Ovary (tissue), 10 donors: ENCODE measurements at regions of chr3 and their contacts with region 1.

Region 1: DNA sequence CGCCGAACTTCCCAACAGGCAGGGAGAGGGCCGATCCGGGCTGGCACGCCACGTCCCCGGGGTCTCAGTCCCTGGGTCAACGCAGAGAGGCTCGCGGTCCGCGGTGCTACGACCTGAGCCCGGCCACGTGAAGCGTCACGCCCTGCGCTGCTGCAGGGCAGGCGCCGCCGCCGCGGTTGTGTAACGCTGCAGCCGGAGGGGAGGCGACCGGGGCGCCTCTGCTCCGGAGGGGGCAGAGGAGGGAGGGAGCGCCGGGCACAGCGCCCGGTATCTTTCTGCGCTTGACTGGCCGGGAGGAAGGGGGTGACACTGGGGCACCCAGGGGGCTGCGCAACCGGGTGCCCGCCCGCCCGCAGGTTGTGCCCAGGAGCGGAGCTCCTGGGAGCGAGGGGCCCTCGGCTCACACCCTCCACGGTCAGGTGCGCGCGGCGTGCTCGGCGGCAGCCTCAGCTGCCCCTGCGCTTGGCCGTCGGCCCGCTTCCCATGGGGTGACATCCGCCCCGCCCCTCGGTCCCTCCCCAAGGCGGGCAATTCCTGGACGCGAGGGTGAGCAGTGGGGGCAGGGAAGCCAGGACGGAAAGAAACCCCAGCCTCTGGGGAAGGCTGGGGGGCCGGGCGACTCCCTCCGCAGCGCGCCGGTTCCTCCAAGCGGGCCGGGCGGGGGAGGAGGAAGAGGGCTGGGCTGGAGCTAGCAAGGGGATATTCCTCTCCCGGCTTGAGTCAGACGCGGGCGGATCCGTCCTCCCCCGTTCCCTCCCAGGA is 852 bp upstream of the BHLHE40 start:
- DNase-seq: peak; percentile 95 to 97 (median 97)
- H3K4me3 ChIP-seq: peak overlapping the region; percentile 87
- H3K27ac ChIP-seq: peak overlapping the region; percentile 97 to 98
- H3K4me1 ChIP-seq: peaks cover 5% of the 10 kb centered on the region
- H3K27me3 ChIP-seq: no peaks in the 10 kb centered on the region
- CTCF ChIP-seq: no peak
- EP300 ChIP-seq: peak; percentile 85
- POLR2A ChIP-seq: peak; percentile 55

Region 2: DNA sequence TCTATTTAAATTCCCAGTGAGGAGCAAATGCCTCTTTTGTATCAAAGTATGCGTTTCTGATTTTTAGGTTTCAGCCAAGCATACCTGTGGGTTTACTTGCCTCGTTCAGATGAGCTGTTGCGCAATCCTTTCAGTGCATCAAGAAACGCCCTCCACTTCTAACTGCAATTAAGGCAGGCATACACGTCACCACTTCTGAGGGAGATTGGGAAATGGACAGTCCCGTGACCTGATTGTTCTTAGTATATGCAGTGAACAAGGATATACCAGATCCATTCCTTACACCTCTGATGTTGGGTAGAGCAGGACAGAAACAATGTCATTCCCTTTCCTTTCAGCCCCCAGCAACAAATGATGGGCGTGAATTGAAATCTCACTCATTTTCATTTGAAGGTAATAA is 266.2 kb before region 1 on chr3:
- intact Hi-C with region 1: loop called in 1 of 4 experiments (anchors 5 kb)
- DNase-seq: peak in 1 of 5 donors; percentile 57
- H3K4me3 ChIP-seq: no peak overlapping the region
- H3K27ac ChIP-seq: no peak overlapping the region
- H3K4me1 ChIP-seq: no peaks in the 10 kb centered on the region
- H3K27me3 ChIP-seq: no peaks in the 10 kb centered on the region
- CTCF ChIP-seq: no peak
- EP300 ChIP-seq: no peak
- POLR2A ChIP-seq: no peak

Region 3: DNA sequence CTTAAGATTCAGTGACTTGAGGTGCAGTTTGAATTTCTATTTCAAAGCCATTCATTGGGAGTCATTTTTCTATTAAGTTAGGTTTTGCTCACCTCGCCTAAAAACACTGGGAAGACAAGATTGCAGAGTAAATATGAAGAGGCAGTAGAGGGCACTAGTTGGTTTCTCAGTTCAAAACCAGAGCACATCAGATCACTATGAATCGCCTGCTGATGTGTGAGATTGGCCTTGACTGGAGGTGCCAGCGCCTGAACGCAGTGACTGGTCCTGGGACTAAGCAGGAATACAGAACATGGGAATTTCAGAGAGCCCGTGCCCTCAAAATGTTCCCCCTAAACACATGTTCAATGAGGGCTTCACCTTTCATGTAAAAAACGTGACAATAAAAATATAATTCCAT is 256.3 kb before region 1 on chr3:
- intact Hi-C with region 1: loop called (anchors 2 to 10 kb)
- DNase-seq: peak in 2 of 5 donors; percentile 53 to 66
- H3K4me3 ChIP-seq: no peak overlapping the region
- H3K27ac ChIP-seq: peak overlapping the region; percentile 46 to 73
- H3K4me1 ChIP-seq: peaks cover 11% of the 10 kb centered on the region
- H3K27me3 ChIP-seq: no peaks in the 10 kb centered on the region
- CTCF ChIP-seq: peak in 2 of 3 donors; percentile 31 to 41
- EP300 ChIP-seq: no peak
- POLR2A ChIP-seq: no peak

Region 4: DNA sequence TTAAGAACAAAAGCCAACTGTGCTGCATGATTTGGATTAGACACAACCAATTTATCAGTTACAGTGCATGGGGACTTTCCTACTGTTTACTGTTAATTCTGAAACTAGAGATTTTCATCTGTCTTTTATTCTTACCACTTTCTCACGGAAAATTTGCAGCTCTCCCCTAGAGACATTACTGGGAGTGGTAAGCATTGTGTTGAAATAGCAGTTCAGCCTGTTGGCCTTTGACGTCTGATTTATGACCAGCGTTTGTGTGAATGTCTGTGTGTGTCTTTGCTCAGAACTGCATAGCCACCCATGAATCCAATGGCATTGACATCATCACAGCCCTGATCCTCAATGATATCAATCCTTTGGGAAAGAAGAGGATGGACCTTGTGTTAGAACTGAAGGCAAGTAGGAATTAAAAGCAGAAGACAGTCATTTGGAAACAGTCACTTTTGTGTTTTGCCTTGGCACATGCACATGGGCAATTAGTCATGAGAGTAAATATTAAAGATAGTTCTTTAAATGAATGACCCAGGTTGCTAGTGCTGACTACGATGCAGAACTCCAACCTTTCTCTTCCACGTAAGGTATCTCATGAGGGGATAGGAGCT is 201.3 kb before region 1 on chr3:
- intact Hi-C with region 1: no loop called
- DNase-seq: no peak
- H3K4me3 ChIP-seq: no peak overlapping the region
- H3K27ac ChIP-seq: no peak overlapping the region
- H3K4me1 ChIP-seq: peaks cover 15% of the 10 kb centered on the region
- H3K27me3 ChIP-seq: no peaks in the 10 kb centered on the region
- CTCF ChIP-seq: no peak
- EP300 ChIP-seq: no peak
- POLR2A ChIP-seq: no peak

Region 5: GRCh38 chr3:4904811-4905695 is 73.3 kb before region 1 on chr3:
- intact Hi-C with region 1: loop called in 1 of 4 experiments (anchors 5 kb)
- DNase-seq: no peak
- H3K4me3 ChIP-seq: no peak overlapping the region
- H3K27ac ChIP-seq: no peak overlapping the region
- H3K4me1 ChIP-seq: peaks cover 5% of the 10 kb centered on the region
- H3K27me3 ChIP-seq: no peaks in the 10 kb centered on the region
- CTCF ChIP-seq: no peak
- EP300 ChIP-seq: no peak
- POLR2A ChIP-seq: no peak

Region 6: GRCh38 chr3:5026331-5027218 is 48.2 kb after region 1 on chr3:
- intact Hi-C with region 1: loop called in 2 of 4 experiments (anchors 5 kb)
- DNase-seq: peak; percentile 86 to 96 (median 89)
- H3K4me3 ChIP-seq: peak overlapping the region; percentile 47
- H3K27ac ChIP-seq: peak overlapping the region; percentile 26 to 75
- H3K4me1 ChIP-seq: peaks cover 4% of the 10 kb centered on the region
- H3K27me3 ChIP-seq: no peaks in the 10 kb centered on the region
- CTCF ChIP-seq: peak; percentile 34 to 82 (median 81)
- EP300 ChIP-seq: no peak
- POLR2A ChIP-seq: peak; percentile 5